Aorta (tissue), 5 donors: ENCODE measurements at regions of chr2 and their contacts with region 1.

Region 1: DNA sequence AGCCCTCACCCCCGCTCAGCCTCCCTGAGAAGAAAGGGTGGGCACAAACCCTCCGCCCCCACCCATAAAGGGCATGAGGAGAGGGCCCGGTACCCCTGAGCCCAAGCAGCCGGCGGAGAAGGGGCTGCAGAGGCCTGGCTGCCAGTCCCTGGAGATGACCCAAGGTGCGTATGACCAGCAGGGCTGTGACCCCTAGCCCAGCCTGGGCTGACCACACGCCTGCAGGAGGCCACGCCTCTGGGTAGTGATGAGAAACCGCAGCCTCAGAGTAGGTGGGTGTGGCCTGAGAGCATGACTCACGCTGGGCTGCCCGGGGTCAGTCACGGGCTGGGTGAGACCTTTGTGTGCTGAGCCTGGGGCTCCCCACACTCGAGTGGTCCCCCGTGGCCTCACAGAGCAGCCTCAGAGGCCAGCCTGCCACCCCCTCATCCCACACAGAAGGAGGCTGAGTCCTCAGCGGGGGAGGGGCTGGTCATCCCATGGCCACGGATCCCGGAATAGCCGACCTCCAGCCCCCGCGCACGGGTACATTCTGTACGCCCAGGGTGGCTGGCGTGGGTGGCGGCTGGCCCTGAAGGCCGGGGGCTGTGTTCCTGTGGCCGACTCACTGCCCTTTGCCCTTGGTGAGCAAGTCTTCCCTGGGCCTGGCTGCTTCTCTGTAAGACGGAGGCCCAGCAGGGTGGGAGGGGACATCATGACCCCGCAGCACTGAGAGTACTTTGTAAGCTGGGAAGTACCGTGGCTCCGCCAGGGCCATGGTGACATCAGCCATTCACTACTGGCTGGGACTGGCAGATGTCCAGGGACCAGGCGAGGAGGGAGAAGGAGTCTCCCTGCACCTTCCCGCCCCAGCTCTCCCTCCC is 110.8 kb upstream of the OTOS start:
- DNase-seq: peak; percentile 94 to 97
- ATAC-seq: peak; percentile 93
- H3K4me3 ChIP-seq: no peak overlapping the region
- H3K27ac ChIP-seq: peak overlapping the region; percentile 28 to 78
- H3K4me1 ChIP-seq: no peaks in the 10 kb centered on the region
- H3K27me3 ChIP-seq: no peaks in the 10 kb centered on the region

Region 2: DNA sequence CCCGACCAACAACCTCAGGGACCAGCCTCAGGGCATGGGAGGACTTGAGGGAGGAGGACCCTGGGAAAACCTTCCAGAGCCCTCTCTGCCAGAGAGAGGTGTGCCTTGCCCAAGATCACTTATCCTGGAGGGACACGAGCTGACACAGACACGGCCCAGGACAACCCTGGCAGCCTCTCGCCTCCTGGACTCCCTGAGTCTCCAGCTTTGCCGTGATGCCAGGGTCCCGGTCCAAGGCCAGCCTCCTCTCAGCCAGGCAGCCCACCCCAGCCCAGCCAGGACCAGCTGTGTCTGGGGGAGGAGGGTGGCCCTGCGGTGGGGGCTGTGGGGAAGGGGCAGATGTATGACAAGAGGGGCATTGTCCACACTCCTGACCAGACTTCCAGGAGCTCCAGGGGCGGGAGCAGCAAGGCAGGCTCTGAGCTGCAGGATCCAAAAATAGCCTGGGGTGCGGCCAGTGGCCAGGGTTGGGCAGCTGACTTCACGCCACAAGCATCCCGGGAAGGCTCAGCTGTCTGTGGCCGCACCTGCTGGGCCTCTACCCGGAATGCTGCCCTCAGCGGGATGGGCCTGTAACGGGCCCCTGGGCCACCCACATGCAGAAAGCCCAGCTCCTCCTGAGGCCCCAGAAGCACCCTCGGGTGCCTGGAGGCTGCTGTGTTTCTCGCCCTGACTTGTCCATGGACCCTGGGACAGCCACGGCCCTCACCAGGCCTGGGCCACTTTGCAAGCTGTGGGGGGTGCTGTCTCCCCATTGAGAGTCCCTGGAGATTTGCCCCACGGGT is 118.8 kb after region 1 on chr2:
- intact Hi-C with region 1: loop called (anchors 5 kb)
- DNase-seq: peak; percentile 88 to 93
- ATAC-seq: peak; percentile 67
- H3K4me3 ChIP-seq: no peak overlapping the region
- H3K27ac ChIP-seq: peak overlapping the region; percentile 59 to 94
- H3K4me1 ChIP-seq: no peaks in the 10 kb centered on the region
- H3K27me3 ChIP-seq: no peaks in the 10 kb centered on the region